GM12878 (cell line): ENCODE measurements at regions of chr18 and their contacts with region 1.

Region 1: DNA sequence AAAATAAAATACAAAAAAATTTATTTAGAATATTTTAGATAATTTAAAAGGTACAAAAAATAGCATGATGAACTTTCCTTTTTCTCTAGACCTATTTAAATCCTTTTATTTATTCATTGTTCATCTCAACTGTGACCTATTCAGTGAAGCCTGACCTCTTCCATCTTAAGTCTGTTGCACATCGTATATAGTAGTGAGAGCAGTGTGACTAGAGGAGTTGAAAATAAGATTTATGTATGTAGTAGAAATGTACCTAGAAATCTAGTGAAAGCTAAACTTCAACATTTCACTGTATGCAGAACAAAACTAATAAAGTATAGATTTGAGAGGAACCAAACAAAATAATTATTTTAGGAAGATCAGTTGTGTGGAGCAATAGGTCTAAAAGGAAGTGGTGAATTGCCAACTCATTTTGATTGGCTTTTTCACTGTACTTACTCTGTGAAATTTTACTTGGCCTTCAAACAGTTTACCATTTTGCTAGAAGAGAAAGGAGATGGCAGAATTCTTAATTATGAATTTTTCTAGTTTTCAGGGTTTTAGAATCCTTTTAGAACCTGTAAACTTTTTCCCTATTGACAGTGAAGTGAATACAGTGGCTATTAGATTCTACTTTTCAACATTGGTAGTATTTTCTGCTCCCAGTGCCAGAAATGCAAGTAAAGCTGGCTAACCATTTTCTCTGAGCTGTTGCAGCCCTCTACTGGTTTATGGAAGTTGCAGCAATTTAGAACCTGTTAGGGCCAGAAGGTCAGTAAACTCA is 11.0 kb downstream of the ANKRD12 start:
- DNase-seq: peak; percentile 53
- ATAC-seq: peak; percentile 72
- H3K4me3 ChIP-seq: peak overlapping the region; percentile 32; the same call in 1 of the 2 replicates
- H3K27ac ChIP-seq: peak overlapping the region; percentile 71
- H3K4me1 ChIP-seq: peaks cover 48% of the 10 kb centered on the region
- H3K27me3 ChIP-seq: no peaks in the 10 kb centered on the region
- CTCF ChIP-seq: peak; percentile 69 to 88 (median 86)
- EP300 ChIP-seq: no peak
- POLR2A ChIP-seq: no peak
- RAD21 ChIP-seq: peak; percentile 94

Region 2: GRCh38 chr18:8608795-8609658 is 538.6 kb before region 1 on chr18 and contains the start of gene RAB12:
- CTCF ChIA-PET with region 1: no interaction called
- POLR2A ChIA-PET with region 1: no interaction called
- RAD21 ChIA-PET with region 1: no interaction called
- SMC1A ChIA-PET with region 1: no interaction called
- in situ Hi-C with region 1: no loop called
- intact Hi-C with region 1: loop called (anchors 10 kb)
- DNase-seq: no peak
- ATAC-seq: peak; percentile 65
- H3K4me3 ChIP-seq: peak within 1 kb of the TSS; percentile 99
- H3K27ac ChIP-seq: peak within 1 kb of the TSS; percentile 77
- H3K4me1 ChIP-seq: peaks cover 31% of the 10 kb centered on the region
- H3K27me3 ChIP-seq: no peaks in the 10 kb centered on the region
- CTCF ChIP-seq: peak; percentile 45 to 63 (median 45); a peak in 5 of 6 replicates
- EP300 ChIP-seq: no peak
- POLR2A ChIP-seq: peak; percentile 82
- RAD21 ChIP-seq: 0 out of 2 replicates have a peak, but pooled peaks have one; percentile 6
- polyA plus RNA-seq, gene RAB12: 0.72 to 1.5 TPM

Region 3: DNA sequence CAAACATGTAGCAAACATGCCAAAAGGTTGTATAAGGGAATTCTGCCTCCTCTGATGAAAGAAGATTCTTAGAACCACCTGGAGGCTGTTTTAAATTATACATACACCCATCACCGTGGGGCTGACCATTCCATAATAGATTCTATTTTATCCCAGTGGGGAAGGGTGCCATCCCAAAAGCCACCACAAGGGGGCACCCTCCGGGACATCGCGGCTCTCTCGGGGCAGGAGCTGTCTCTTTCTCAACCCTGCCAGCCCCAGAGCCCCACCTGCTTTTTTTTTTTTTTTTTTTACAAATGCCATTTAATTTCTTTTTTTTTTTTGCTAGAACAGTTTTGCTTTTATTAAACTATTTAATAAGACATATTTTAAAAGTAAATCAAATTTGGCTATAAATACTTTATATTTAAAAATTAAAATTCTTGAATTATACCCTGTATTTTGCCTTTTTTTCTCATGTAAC is 450.8 kb before region 1 on chr18:
- CTCF ChIA-PET with region 1: interaction called, 4 read pairs
- POLR2A ChIA-PET with region 1: no interaction called
- RAD21 ChIA-PET with region 1: no interaction called
- SMC1A ChIA-PET with region 1: no interaction called
- in situ Hi-C with region 1: loop called (anchors 10 kb)
- intact Hi-C with region 1: loop called (anchors 10 kb)
- DNase-seq: no peak
- ATAC-seq: peak; percentile 95
- H3K4me3 ChIP-seq: no peak overlapping the region
- H3K27ac ChIP-seq: no peak overlapping the region
- H3K4me1 ChIP-seq: peaks cover 7% of the 10 kb centered on the region; the same call in 1 of the 2 replicates
- H3K27me3 ChIP-seq: peaks cover 0 to 3% of the 10 kb centered on the region in 2 experiments; a peak in 3 of 4 replicates
- CTCF ChIP-seq: peak; percentile 69 to 85 (median 82)
- EP300 ChIP-seq: no peak
- POLR2A ChIP-seq: no peak
- RAD21 ChIP-seq: peak; percentile 69

Region 4: GRCh38 chr18:8988261-8988871 is 159.3 kb before region 1 on chr18:
- CTCF ChIA-PET with region 1: interaction called, 5 read pairs
- POLR2A ChIA-PET with region 1: no interaction called
- RAD21 ChIA-PET with region 1: interaction called, 3 read pairs
- SMC1A ChIA-PET with region 1: interaction called, 6 read pairs
- in situ Hi-C with region 1: loop called (anchors 10 kb)
- intact Hi-C with region 1: loop called (anchors 5 kb)
- DNase-seq: no peak
- ATAC-seq: peak; percentile 98
- H3K4me3 ChIP-seq: no peak overlapping the region
- H3K27ac ChIP-seq: no peak overlapping the region
- H3K4me1 ChIP-seq: peaks cover 3% of the 10 kb centered on the region
- H3K27me3 ChIP-seq: no peaks in the 10 kb centered on the region
- CTCF ChIP-seq: peak; percentile 89 to 91 (median 91); a peak in 5 of 6 replicates
- EP300 ChIP-seq: no peak
- POLR2A ChIP-seq: no peak
- RAD21 ChIP-seq: peak; percentile 91

Region 5: DNA sequence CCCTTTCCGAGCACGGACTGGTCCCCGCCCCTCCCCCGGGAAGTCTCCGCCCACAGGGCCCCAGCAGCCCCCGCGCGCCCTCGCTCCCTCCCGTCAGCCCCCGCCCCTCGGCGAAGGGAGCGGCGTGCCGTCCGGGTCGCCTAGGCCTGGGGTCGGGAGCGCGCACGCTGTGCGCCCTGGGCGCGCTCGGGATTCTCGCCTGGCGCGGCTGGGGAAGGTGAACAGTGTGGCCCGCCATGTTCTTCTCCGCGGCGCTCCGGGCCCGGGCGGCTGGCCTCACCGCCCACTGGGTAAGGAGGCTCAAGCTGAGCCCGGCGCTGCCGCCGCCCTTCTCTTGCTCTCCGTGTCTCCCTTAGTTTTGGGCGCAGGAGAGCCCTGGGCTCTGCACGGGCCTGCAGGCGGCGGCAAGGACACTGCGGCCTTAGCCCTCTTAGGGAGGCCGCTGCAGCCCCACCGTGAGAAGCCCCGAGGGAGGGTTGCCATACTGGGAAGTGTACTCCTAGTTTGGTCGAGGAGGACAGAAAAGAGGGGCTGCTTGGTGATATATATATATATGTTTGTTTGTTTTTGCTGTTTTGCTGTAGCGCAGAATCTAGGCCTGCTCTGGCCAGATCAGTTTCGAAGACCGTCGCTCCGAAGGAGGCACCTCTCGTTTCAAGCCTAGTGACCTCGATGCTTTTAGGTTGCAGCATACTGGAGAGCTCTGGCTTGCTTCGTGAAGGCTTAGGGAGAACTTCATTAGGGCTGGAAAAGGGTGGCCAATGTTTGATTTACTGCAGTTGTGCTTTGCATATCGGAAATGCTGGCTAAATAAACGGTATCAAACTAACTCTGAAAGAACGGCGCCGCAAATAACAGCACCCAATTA is 44.9 kb before region 1 on chr18 and contains the start of gene NDUFV2:
- CTCF ChIA-PET with region 1: interaction called, 95 read pairs
- POLR2A ChIA-PET with region 1: interaction called, 85 read pairs
- RAD21 ChIA-PET with region 1: interaction called, 73 read pairs
- SMC1A ChIA-PET with region 1: interaction called, 137 read pairs
- in situ Hi-C with region 1: no loop called
- intact Hi-C with region 1: no loop called
- DNase-seq: peak; percentile 77
- ATAC-seq: peak; percentile 93
- H3K4me3 ChIP-seq: peak within 1 kb of the TSS; percentile 87
- H3K27ac ChIP-seq: peak within 1 kb of the TSS; percentile 85
- H3K4me1 ChIP-seq: peaks cover 5% of the 10 kb centered on the region
- H3K27me3 ChIP-seq: no peaks in the 10 kb centered on the region
- CTCF ChIP-seq: no peak
- EP300 ChIP-seq: no peak
- POLR2A ChIP-seq: peak; percentile 87
- RAD21 ChIP-seq: no peak
- polyA plus RNA-seq, gene NDUFV2: 409 to 471 TPM

Region 6: DNA sequence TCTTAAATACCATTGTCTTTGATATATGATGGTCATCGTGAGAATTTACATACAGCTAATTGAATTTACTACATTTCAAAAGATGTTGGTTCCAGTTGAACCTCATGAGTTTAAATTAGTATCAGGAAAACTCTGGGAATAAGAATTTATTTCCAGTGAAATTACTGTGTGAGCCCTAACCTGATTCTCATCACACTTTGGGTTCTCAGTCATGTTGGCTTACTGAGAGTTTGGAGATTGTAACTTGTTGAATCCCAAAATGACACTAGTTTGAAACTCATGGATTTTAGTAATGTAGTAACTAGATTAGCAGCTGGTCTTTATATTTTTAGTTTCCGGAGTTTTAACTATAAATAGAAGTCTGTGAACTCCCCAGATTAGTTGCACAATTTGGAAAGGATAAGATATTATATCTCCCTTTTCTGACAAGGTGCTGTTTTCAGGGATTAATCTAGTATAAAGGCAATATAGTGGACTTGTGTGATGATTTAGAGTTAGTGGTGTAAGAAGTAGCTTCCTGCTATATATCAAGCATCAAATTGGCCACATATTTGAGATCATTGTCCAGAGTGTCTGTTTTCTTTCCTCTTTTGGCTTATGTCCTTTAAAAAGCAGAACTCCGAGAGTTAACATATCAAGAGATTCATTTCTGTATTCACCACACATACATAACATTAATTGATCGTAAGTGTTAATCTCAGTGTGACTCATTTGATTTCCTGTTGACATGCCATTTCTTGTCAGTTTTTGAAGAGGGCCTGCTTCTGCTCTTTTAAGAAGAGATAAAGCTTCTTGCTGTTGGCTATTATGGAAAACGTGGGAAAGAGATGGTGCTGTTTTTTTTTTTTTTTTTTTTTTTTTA is 29.4 kb before region 1 on chr18:
- CTCF ChIA-PET with region 1: interaction called, 14 read pairs
- POLR2A ChIA-PET with region 1: interaction called, 3 read pairs
- RAD21 ChIA-PET with region 1: interaction called, 40 read pairs
- SMC1A ChIA-PET with region 1: interaction called, 137 read pairs
- in situ Hi-C with region 1: no loop called
- intact Hi-C with region 1: no loop called
- DNase-seq: no peak
- ATAC-seq: peak; percentile 48
- H3K4me3 ChIP-seq: peak overlapping the region; percentile 25
- H3K27ac ChIP-seq: peak overlapping the region; percentile 89
- H3K4me1 ChIP-seq: peaks cover 38% of the 10 kb centered on the region
- H3K27me3 ChIP-seq: no peaks in the 10 kb centered on the region
- CTCF ChIP-seq: no peak
- EP300 ChIP-seq: peak in 1 of 2 experiments; percentile 54; a peak in 1 of 4 replicates
- POLR2A ChIP-seq: no peak
- RAD21 ChIP-seq: no peak

Region 7: GRCh38 chr18:9516437-9517064 is 368.9 kb after region 1 on chr18:
- CTCF ChIA-PET with region 1: interaction called, 5 read pairs
- POLR2A ChIA-PET with region 1: no interaction called
- RAD21 ChIA-PET with region 1: interaction called, 4 read pairs
- SMC1A ChIA-PET with region 1: interaction called, 3 read pairs
- in situ Hi-C with region 1: no loop called
- intact Hi-C with region 1: loop called (anchors 5 kb)
- DNase-seq: peak; percentile 17
- ATAC-seq: peak; percentile 74
- H3K4me3 ChIP-seq: no peak overlapping the region
- H3K27ac ChIP-seq: no peak overlapping the region
- H3K4me1 ChIP-seq: no peaks in the 10 kb centered on the region
- H3K27me3 ChIP-seq: no peaks in the 10 kb centered on the region
- CTCF ChIP-seq: peak; percentile 76 to 88 (median 84)
- EP300 ChIP-seq: no peak
- POLR2A ChIP-seq: no peak
- RAD21 ChIP-seq: peak; percentile 95

Region 8: GRCh38 chr18:10604182-10604581 is 1456.6 kb after region 1 on chr18:
- CTCF ChIA-PET with region 1: no interaction called
- POLR2A ChIA-PET with region 1: no interaction called
- RAD21 ChIA-PET with region 1: no interaction called
- SMC1A ChIA-PET with region 1: no interaction called
- in situ Hi-C with region 1: no loop called
- intact Hi-C with region 1: no loop called
- DNase-seq: no peak
- ATAC-seq: peak; percentile 45; the same call in 1 of the 3 replicates
- H3K4me3 ChIP-seq: no peak overlapping the region
- H3K27ac ChIP-seq: no peak overlapping the region; the same call in 1 of the 2 replicates
- H3K4me1 ChIP-seq: no peaks in the 10 kb centered on the region; the same call in 1 of the 2 replicates
- H3K27me3 ChIP-seq: no peaks in the 10 kb centered on the region
- CTCF ChIP-seq: no peak
- EP300 ChIP-seq: no peak
- POLR2A ChIP-seq: no peak
- RAD21 ChIP-seq: no peak